ENCODE measurements at regions of chr6 and their contacts with region 1.

Region 1: GRCh38 chr6:138833816-138834539 is 38.1 kb downstream of the ECT2L start:
- DNase-seq: peak; percentile 68
- ATAC-seq: peak; percentile 96

Region 2: DNA sequence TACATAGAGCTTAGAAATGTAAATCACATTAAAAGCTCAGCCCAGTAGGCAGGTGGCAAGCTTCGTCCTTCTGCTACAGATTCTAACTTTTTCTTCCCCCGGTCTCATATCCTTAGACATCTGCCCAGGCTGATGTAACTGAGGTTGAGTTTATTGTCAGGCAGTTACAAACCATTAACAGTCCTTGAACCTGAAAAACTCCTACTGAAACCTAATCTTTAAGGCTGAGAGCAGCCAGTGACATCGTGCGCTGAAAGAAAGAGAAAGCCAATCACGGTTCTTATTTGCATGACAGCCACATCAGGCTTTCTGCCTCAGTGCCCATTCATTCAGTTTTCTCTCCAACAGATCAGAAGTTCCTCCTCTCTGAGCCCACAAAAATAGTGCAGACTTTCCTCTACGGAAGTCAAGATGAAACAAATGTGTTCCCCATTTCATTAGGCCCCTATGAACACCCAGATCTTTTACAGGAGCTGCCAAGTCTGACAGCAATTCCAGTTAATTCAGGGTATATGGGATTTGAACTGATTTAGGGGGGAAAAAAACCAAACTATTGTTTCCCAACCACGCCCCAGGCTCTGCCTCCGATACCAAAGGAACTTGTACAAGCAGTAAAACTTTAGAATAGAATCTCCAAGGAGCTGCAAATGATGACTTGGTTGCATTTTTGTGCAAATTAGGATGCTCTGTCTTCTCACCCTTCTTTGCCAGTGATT is 334.5 kb before region 1 on chr6 and contains the start of gene NHSL1:
- intact Hi-C with region 1: no loop called
- DNase-seq: no peak
- ATAC-seq: peak; percentile 30
- total RNA-seq, gene NHSL1: 56.6 TPM

Region 3: GRCh38 chr6:138869398-138869797 is 35.4 kb after region 1 on chr6:
- intact Hi-C with region 1: loop called (anchors 5 kb)
- DNase-seq: peak; percentile 63
- ATAC-seq: peak; percentile 88

Region 4: GRCh38 chr6:138944412-138944811 is 110.4 kb after region 1 on chr6:
- intact Hi-C with region 1: no loop called
- DNase-seq: no peak
- ATAC-seq: no peak

Measured in Right ventricle myocardium inferior (tissue), 1 donor.